Right lobe of liver (tissue), 6 donors: ENCODE measurements at regions of chr3 and their contacts with region 1.

Region 1: DNA sequence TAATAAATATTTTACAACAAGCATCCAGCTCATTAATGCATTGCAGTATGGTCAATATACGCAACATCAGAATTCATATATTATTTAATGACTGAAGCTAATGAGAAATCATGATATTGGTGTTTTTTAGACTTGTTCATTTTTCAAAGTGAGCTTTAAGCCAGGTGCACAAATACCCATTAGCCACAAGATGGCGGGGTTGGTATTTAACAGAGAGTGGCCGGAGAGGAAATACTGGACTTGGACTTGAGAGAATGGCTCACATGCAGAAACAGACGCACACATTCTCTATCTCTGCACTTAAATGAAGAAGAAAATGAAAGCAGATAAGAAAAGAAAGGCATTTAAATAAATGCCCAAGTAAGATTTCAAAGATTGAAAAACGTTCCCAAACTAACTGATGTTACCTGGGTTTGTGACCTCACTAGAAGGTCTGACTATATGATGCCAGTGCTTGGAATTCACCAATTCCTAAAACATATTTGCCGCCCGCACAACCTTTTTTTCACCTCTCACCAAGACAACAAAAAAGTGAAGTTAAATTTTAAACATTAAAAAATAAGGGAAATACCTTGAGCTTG is 21.2 kb upstream of the CRBN start:
- DNase-seq: peak in 2 of 3 donors; percentile 21 to 49
- ATAC-seq: peak; percentile 86 to 92 (median 88)
- H3K4me3 ChIP-seq: no peak overlapping the region
- H3K27ac ChIP-seq: no peak overlapping the region
- H3K4me1 ChIP-seq: no peaks in the 10 kb centered on the region
- H3K27me3 ChIP-seq: no peaks in the 10 kb centered on the region
- CTCF ChIP-seq: peak; percentile 74 to 84 (median 80)
- POLR2A ChIP-seq: no peak

Region 2: DNA sequence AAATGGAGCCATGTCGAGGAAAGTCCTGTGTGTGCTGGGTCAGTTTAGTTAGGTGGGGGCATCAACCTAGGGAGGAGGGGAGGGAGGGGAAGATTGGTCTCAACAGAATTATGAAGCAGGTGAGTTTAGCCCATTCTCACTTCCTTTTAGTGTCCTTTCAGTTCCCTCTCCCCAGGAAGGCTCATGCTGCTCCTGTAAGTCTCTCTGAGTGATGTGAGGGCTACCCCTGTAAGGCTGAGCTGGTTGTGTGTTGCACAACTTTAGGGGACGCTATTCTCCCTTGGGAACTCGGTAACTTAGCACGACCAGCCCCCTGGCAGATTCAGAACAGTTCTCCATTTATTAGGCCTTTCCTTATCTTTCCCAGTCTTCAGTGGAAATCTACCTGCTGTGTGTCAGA is 111.7 kb before region 1 on chr3:
- intact Hi-C with region 1: no loop called
- DNase-seq: no peak
- ATAC-seq: no peak
- H3K4me3 ChIP-seq: no peak overlapping the region
- H3K27ac ChIP-seq: no peak overlapping the region
- H3K4me1 ChIP-seq: no peaks in the 10 kb centered on the region
- H3K27me3 ChIP-seq: no peaks in the 10 kb centered on the region
- CTCF ChIP-seq: no peak
- POLR2A ChIP-seq: no peak

Region 3: DNA sequence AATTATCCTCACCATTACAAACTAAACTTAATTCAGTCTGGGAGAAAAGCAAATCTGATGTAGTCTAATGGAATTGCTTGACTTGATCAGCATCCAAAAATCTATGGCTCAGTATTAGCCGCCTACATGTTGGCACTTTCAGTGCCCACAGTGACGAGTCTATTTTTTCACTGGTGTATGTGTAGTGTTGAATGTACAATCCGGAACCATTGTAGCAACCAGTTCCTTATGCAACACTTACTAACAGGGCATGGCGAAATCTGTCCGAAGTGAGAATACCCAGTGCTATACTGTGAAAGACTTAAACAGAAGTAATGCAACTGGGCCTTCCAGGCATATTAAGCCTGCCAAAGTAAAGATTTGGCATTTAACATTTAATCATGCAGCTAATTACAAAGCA is 617.1 kb after region 1 on chr3:
- intact Hi-C with region 1: no loop called
- DNase-seq: no peak
- ATAC-seq: peak in 2 of 4 donors; percentile 12 to 21
- H3K4me3 ChIP-seq: no peak overlapping the region
- H3K27ac ChIP-seq: no peak overlapping the region
- H3K4me1 ChIP-seq: no peaks in the 10 kb centered on the region
- H3K27me3 ChIP-seq: no peaks in the 10 kb centered on the region
- CTCF ChIP-seq: no peak
- POLR2A ChIP-seq: no peak

Region 4: DNA sequence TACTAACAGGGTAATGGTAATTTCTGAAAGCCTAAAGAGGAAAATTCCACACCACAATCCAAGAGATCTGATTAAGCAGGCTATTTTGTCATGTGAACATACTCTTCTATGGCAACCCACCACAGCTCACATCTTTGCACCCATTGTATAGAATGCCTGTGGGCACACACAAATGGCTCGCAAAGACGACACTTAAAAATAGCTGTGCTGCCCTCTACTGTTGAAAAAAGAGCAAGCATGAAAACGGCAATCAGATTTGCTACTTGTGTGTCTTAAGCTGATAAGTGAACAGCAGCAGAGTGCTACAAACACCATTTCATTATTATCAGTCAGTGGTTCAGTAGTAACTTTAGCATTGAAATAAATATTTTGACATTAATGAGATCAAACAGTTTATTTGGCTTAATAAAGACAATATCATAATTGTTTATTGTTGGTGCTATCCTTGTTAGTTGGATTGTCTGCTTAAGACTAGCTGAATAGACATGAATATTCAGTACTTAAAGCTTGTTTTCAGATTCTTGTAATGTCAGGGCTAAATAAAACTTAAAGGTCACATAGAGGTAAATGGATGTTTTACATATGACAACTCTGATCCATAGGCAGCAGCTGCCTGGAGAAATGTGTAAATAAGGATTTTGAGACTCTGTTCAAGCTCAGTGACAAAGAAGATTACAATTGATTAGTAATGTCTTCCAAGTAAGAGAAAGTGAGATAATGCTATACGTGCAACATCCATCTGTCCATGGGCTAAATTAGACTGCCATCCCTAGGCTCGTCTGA is 797.6 kb after region 1 on chr3:
- intact Hi-C with region 1: loop called in 1 of 2 experiments (anchors 10 kb)
- DNase-seq: no peak
- ATAC-seq: peak; percentile 70 to 80 (median 74)
- H3K4me3 ChIP-seq: no peak overlapping the region
- H3K27ac ChIP-seq: no peak overlapping the region
- H3K4me1 ChIP-seq: no peaks in the 10 kb centered on the region
- H3K27me3 ChIP-seq: no peaks in the 10 kb centered on the region
- CTCF ChIP-seq: peak; percentile 58 to 65 (median 63)
- POLR2A ChIP-seq: no peak

Region 5: GRCh38 chr3:4284865-4285264 is 1084.1 kb after region 1 on chr3:
- intact Hi-C with region 1: loop called in 1 of 2 experiments (anchors 5 kb)
- DNase-seq: no peak
- ATAC-seq: no peak
- H3K4me3 ChIP-seq: no peak overlapping the region
- H3K27ac ChIP-seq: no peak overlapping the region
- H3K4me1 ChIP-seq: no peaks in the 10 kb centered on the region
- H3K27me3 ChIP-seq: no peaks in the 10 kb centered on the region
- CTCF ChIP-seq: no peak
- POLR2A ChIP-seq: no peak